Activated naive CD4-positive, alpha-beta T cell treated with anti-CD3 and anti-CD28 coated beads for 36 hours (primary cell): ENCODE measurements at regions of chr9 and their contacts with region 1.

Region 1: DNA sequence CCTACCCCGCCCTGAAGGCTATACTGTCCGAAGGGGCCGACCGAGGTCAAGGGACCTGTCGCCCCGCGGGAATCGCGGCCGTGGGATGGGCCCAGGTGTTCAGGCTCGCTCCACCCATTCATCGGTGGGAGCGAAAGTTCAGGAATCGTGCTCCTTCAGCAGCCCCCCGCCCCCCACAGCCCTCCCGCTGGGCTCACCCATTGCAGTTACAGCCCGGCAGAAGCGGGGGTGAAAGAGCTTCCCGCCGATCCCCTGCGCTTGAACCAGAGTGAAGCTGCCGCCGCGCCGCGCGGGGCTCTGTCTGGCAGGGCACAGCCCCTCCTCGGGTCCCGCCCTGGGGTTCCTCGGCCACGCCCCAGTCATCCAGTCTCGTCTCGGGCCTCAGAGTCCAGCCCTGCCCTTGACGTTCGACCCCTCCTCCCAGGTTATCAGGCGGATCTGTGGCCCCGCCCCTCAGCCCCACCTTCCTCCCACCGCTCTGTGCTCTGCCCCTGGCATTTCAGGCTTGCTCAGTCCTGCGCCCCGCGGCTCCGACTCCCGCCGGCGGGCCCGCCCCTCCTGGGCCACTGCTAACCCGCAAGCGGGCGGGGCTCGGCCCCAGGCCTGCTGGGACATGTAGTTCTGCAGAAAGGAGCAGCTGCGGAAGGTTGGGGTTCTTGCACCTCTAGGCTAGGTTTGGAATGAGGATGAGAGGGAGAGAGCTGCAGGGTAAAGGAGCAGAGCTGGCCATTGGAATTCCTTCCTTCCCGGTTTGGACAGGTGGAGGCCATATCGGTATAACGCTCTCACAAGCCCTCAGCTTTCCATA is at the start of gene MYORG:
- DNase-seq: peak; percentile 97
- H3K4me3 Mint-ChIP-seq: peak within 1 kb of the TSS; percentile 80
- H3K27ac Mint-ChIP-seq: no peak within 1 kb of the TSS
- H3K4me1 Mint-ChIP-seq: peaks cover 30% of the 10 kb centered on the region
- H3K27me3 Mint-ChIP-seq: no peaks in the 10 kb centered on the region
- total RNA-seq, gene MYORG: 1.1 to 2.0 TPM

Region 2: DNA sequence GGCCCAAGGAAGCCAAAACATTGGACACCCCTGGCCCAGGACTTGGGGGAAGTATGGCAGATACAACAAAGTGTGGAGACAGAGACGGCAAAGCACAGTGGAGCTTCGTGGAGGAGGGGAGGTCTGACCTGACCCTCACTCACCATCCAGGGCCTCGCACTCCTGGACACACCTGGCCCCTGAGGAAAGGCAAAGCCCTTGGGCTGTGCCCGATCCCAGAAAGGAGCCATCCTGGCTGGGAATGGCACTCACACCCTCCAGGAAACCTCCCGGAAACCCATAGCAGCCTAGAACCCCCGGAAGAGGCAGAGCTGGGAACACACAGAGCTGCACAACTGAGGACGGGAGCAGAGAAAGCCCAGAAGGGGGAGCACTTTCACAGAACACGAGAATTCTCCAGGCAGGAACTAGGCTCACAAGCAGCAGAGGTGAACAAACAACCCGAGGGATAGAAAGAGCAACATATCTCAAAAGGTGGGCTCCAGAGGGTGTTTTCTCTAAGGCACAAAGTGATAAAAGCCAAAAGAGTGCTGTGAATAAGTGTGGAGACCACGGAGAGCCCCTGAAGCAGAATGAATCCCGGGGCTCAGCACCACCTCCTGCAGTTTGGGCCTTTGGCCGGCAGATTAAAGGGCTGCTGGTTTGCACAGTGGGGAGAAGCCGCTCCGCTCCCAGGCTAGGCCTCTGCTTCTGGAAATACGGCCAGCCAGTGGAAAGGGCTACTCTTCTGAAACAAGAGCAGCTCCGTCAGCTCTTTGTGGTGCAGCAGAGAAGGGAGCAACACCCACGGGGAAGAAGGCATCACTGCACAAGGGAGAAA is 451.6 kb before region 1 on chr9:
- CTCF ChIA-PET with region 1: no interaction called
- intact Hi-C with region 1: loop called (anchors 1 kb)
- DNase-seq: peak; percentile 48
- H3K4me3 Mint-ChIP-seq: no peak overlapping the region
- H3K27ac Mint-ChIP-seq: no peak overlapping the region
- H3K4me1 Mint-ChIP-seq: no peaks in the 10 kb centered on the region
- H3K27me3 Mint-ChIP-seq: no peaks in the 10 kb centered on the region

Region 3: GRCh38 chr9:34072868-34073590 is 303.8 kb before region 1 on chr9:
- CTCF ChIA-PET with region 1: no interaction called
- intact Hi-C with region 1: loop called (anchors 1 kb)
- DNase-seq: no peak
- H3K4me3 Mint-ChIP-seq: no peak overlapping the region
- H3K27ac Mint-ChIP-seq: no peak overlapping the region
- H3K4me1 Mint-ChIP-seq: no peaks in the 10 kb centered on the region
- H3K27me3 Mint-ChIP-seq: no peaks in the 10 kb centered on the region

Region 4: GRCh38 chr9:34178520-34179212 is 198.1 kb before region 1 on chr9 and contains the start of gene UBAP1:
- CTCF ChIA-PET with region 1: no interaction called
- intact Hi-C with region 1: loop called (anchors 1 kb)
- DNase-seq: peak; percentile 99
- H3K4me3 Mint-ChIP-seq: peak within 1 kb of the TSS; percentile 84
- H3K27ac Mint-ChIP-seq: peak within 1 kb of the TSS; percentile 94
- H3K4me1 Mint-ChIP-seq: peaks cover 16% of the 10 kb centered on the region
- H3K27me3 Mint-ChIP-seq: no peaks in the 10 kb centered on the region
- total RNA-seq, gene UBAP1: 29.9 to 31.7 TPM

Region 5: DNA sequence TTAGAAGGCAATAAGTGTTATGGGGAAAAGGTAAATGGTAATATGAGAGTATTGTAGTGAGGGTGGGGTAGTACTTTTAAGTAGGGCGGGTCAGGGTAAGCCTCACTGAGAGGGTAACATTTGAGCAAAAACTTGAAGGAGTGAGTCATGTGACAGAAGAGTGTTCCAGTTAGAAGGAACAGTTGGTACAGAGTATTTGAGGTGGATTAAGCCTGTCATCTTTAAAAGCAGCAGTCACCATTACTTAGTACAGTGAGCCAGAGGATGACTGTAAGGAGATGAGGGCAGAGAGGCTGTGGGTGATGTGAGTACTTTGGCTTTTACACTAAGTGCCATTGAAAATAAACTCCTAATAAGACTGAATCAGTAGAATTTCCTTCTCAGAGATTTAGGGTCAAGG is 143.1 kb before region 1 on chr9:
- CTCF ChIA-PET with region 1: no interaction called
- intact Hi-C with region 1: no loop called
- DNase-seq: no peak
- H3K4me3 Mint-ChIP-seq: no peak overlapping the region
- H3K27ac Mint-ChIP-seq: no peak overlapping the region
- H3K4me1 Mint-ChIP-seq: peaks cover 5% of the 10 kb centered on the region
- H3K27me3 Mint-ChIP-seq: no peaks in the 10 kb centered on the region

Region 6: GRCh38 chr9:34403554-34404380 is 27.0 kb after region 1 on chr9:
- CTCF ChIA-PET with region 1: interaction called, 14 read pairs
- intact Hi-C with region 1: no loop called
- DNase-seq: peak; percentile 79
- H3K4me3 Mint-ChIP-seq: no peak overlapping the region
- H3K27ac Mint-ChIP-seq: no peak overlapping the region
- H3K4me1 Mint-ChIP-seq: no peaks in the 10 kb centered on the region
- H3K27me3 Mint-ChIP-seq: no peaks in the 10 kb centered on the region